PC-3 (cell line): ENCODE measurements at regions of chr3 and their contacts with region 1.

Region 1: GRCh38 chr3:35137612-35138011 is 501.7 kb upstream of the ARPP21 start:
- DNase-seq: no peak
- ATAC-seq: no peak
- H3K4me3 ChIP-seq: no peak overlapping the region
- H3K27ac ChIP-seq: no peak overlapping the region
- H3K4me1 ChIP-seq: no peaks in the 10 kb centered on the region
- H3K27me3 ChIP-seq: no peaks in the 10 kb centered on the region
- CTCF ChIP-seq: no peak

Region 2: DNA sequence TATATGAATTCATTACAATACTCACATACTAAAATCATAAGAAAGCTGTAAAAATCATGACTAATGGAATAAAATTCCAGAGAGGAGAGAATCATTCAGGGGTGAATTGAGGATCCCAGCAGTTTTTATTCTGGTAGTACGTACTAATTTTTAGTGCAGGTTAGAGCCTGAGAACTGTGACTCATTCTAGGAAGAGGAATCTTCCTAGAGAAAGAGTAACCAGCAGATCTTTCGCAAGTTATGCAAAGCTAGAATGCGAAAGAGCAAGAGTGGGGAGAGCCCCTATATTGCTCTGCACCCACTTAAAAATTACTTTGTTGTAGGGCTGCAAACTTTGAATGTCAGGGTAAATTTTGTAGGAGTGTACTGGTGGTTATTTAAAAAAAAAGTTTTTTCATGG is 198.1 kb after region 1 on chr3:
- CTCF ChIA-PET with region 1: no interaction called
- POLR2A ChIA-PET with region 1: no interaction called
- intact Hi-C with region 1: loop called (anchors 10 kb)
- DNase-seq: no peak
- ATAC-seq: peak; percentile 66
- H3K4me3 ChIP-seq: no peak overlapping the region
- H3K27ac ChIP-seq: no peak overlapping the region
- H3K4me1 ChIP-seq: no peaks in the 10 kb centered on the region
- H3K27me3 ChIP-seq: no peaks in the 10 kb centered on the region
- CTCF ChIP-seq: no peak